ENCODE measurements at regions of chr14 and their contacts with region 1.

Region 1: DNA sequence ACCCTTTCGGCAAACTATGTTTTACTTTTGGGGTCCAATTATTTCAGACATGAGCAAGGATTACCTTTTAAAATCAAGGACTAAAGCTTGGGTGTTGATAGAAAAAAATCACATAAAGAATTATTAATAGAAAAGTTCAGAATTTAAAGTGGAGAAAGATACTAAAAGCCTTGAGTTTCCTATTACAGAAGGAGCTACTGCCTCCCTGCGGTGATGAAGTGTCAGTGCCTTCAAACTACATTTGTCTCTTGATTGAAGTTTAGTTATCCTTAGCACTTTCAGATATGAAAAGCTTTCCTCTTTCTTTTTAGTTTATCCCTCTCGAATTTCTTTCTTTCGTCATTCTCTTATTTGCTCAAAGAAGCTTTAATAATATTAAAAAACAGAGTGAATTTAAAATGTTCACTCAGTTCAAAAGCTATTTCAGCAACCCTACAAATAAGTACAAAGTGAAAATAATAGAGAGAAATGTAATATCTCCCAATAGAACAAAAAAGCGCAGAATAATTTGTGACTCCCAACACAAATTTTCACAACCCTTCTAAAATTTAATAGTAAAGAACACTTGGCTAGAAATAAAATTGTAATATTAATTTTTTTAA is 87.6 kb downstream of the SEC23A start:
- DNase-seq: no peak
- ATAC-seq: peak; percentile 61
- H3K4me3 ChIP-seq: no peak overlapping the region
- H3K27ac ChIP-seq: no peak overlapping the region
- H3K4me1 ChIP-seq: no peaks in the 10 kb centered on the region
- H3K27me3 ChIP-seq: no peaks in the 10 kb centered on the region
- CTCF ChIP-seq: peak; percentile 85

Region 2: GRCh38 chr14:38710881-38711280 is 304.6 kb before region 1 on chr14:
- intact Hi-C with region 1: no loop called
- DNase-seq: no peak
- ATAC-seq: no peak
- H3K4me3 ChIP-seq: no peak overlapping the region
- H3K27ac ChIP-seq: no peak overlapping the region
- H3K4me1 ChIP-seq: no peaks in the 10 kb centered on the region
- H3K27me3 ChIP-seq: no peaks in the 10 kb centered on the region
- CTCF ChIP-seq: no peak

Region 3: DNA sequence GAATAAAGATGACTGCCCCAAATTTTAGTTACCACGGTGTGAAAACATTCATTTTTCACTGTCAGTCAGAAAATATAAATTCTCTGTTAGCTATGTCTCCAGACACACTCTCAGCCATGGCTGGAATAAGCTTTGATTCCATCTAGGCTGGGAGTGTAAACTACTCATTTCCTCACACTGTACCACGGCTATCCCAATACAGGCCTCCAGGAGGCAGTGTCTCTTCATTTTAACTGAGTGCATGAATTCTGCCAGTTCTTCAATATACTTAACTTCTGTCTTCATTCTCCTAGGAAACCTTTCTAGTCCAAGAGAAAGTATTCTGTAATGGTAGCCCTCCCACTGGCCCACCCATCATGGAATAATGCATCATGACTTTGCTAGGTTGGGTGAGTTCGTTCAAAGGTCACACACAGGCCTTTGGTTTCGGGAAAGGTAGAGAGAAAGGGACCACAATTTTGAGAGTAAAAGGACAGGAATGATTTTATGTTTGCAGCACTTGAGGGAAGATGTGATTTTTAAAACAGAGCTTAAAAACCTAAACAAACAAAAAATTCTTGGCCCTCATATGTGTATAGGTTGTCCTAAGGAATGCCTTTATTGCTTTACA is 293.5 kb before region 1 on chr14:
- intact Hi-C with region 1: loop called (anchors 10 kb)
- DNase-seq: no peak
- ATAC-seq: peak; percentile 95
- H3K4me3 ChIP-seq: no peak overlapping the region
- H3K27ac ChIP-seq: no peak overlapping the region
- H3K4me1 ChIP-seq: no peaks in the 10 kb centered on the region
- H3K27me3 ChIP-seq: no peaks in the 10 kb centered on the region
- CTCF ChIP-seq: peak; percentile 83

Region 4: GRCh38 chr14:38948171-38948570 is 67.3 kb before region 1 on chr14:
- intact Hi-C with region 1: no loop called
- DNase-seq: no peak
- ATAC-seq: no peak
- H3K4me3 ChIP-seq: no peak overlapping the region
- H3K27ac ChIP-seq: no peak overlapping the region
- H3K4me1 ChIP-seq: no peaks in the 10 kb centered on the region
- H3K27me3 ChIP-seq: no peaks in the 10 kb centered on the region
- CTCF ChIP-seq: no peak

Measured in upper lobe of right lung (tissue), 1 donor.